ENCODE measurements at regions of chr3 and their contacts with region 1.

Region 1: GRCh38 chr3:78659386-78659987 is 1108.3 kb downstream of the ROBO1 start:
- DNase-seq: no peak
- H3K4me3 ChIP-seq: no peak overlapping the region
- H3K27ac ChIP-seq: no peak overlapping the region
- H3K4me1 ChIP-seq: no peaks in the 10 kb centered on the region
- H3K27me3 ChIP-seq: no peaks in the 10 kb centered on the region
- CTCF ChIP-seq: peak; percentile 52 to 62

Region 2: DNA sequence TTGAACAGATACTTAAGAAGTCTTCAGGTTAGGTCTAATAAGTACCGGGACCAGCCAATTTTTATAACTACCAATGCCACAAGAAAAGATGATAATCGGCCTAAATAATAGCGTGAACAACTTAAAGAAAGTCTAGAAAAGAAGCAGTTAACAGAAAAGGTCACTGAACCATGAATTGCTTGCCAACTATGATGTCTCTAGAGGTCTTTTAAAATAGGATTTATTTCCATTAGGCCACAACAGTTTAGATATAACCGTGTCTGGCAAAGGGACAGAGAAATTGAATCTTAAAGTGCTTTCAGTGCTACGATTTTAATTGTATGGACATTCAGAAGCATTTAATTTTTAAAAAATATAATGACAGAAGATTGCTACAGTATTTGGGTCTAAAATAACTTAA is 37.9 kb after region 1 on chr3:
- intact Hi-C with region 1: no loop called
- DNase-seq: no peak
- H3K4me3 ChIP-seq: no peak overlapping the region
- H3K27ac ChIP-seq: no peak overlapping the region
- H3K4me1 ChIP-seq: no peaks in the 10 kb centered on the region
- H3K27me3 ChIP-seq: no peaks in the 10 kb centered on the region
- CTCF ChIP-seq: no peak

Region 3: DNA sequence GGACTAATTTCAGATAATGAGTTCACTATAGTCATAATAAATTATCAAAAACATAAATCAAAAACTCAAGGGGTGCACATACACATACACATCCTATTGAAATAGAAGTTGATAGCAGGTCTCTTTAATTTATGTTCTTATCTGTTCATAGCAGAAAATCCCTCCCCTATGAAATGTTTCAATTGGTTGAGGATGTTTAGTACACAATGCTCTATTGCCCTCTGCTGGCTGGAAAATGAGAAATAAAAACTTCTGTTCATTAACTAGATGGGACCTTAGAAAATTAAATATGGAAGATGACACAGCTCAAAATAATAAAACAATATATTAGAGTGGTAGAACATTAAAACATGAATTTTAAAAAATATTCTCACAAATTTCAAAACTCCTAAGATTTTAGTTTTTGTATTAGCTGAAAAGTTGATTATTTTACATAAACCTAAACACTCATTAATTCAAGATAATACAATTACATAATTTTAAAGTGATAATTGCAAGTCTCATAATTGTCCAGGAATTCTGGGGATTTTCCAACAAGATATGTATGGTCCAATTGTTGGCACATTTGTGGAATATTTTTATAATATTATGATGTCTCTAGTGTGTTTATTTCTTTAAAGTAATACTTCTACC is 373.3 kb after region 1 on chr3:
- intact Hi-C with region 1: loop called (anchors 5 kb)
- DNase-seq: no peak
- H3K4me3 ChIP-seq: no peak overlapping the region
- H3K27ac ChIP-seq: no peak overlapping the region
- H3K4me1 ChIP-seq: no peaks in the 10 kb centered on the region
- H3K27me3 ChIP-seq: no peaks in the 10 kb centered on the region
- CTCF ChIP-seq: peak; percentile 54 to 75

Measured in tibial artery (tissue), 4 donors.